Activated CD4-positive, alpha-beta T cell treated with anti-CD3 and anti-CD28 coated beads, Interleukin-2, amount 10 ng/mL, durations not matched to agents 24 days and 14 days (primary cell): ENCODE measurements at regions of chr1 and their contacts with region 1.

Region 1: DNA sequence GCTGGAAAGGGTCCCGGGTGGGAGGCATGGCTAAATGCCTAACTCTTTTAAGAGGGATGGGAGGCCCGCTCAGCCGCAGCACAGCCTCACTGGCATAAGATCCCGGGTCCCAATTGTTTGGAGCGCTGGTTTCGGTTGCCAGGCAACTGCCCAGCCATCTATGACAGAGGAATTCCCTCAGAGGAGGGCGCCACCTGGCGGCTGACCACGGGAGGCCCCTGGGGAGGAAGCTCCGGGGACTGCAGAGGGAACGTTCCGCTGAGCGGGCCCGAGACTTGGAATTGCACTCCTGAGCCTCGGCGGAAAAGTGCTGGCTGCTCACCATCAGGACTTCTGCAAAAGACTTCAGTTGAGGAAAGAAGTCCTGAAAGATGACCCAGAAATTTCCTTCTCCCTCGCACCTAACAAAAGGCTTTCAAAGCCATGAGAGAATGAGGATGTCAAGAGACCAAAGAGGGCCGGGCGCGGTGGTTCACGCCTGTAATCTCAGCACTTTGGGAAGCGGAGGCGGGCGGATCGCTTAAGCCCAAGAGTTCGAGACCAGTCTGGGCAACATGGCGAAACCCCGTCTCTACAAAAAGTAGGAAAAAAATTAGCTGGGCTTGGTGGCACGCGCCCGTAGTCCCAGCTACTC is 1.1 kb upstream of the ELAPOR1 start:
- DNase-seq: peak; percentile 97
- H3K4me3 Mint-ChIP-seq: peak overlapping the region; percentile 84
- H3K27ac Mint-ChIP-seq: peak overlapping the region; percentile 89
- H3K4me1 Mint-ChIP-seq: peaks cover 39% of the 10 kb centered on the region
- H3K27me3 Mint-ChIP-seq: peaks cover 19% of the 10 kb centered on the region

Region 2: DNA sequence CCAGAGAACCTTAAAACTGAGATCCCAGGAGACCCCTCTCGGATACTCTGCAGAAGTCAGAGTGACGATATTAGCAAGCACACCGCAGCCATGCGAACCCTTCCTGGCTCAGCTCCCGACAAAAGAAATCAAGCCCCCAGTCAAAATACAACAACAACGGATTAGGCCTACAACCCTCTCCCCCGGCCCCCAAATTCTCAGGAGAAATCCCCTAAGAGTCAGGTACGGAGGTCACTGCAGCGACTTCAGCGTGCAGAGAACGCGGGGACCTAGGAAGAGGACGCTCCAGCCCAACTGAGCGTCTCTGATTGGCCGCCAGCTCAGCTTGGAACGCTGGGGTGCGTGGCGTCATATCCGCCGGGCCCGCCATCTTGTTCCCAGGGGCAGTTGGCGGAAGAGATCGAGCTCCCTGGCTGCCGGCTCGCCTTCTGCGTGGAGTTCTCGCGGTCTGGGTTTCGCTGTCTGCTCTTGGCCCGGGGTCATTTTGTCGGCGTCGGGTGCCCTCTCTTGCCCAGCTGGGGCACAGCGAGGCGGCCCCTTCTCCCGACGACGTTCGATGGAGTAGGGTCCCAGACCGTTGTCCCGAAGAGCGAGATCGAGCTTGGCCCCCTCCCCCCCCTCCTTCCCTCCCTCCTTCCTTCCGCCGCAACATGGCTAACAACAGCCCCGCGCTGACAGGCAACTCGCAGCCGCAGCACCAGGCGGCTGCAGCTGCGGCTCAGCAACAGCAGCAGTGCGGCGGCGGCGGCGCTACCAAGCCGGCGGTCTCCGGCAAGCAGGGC is 420.6 kb before region 1 on chr1 and contains the start of gene PRPF38B:
- intact Hi-C with region 1: loop called (anchors 10 kb)
- DNase-seq: peak; percentile 98
- H3K4me3 Mint-ChIP-seq: peak within 1 kb of the TSS; percentile 99
- H3K27ac Mint-ChIP-seq: peak within 1 kb of the TSS; percentile 100
- H3K4me1 Mint-ChIP-seq: peaks cover 26% of the 10 kb centered on the region
- H3K27me3 Mint-ChIP-seq: peaks cover 14% of the 10 kb centered on the region
- total RNA-seq, gene PRPF38B: 89.2 and 90.3 TPM in 2 replicates

Region 3: GRCh38 chr1:108828022-108828961 is 284.5 kb before region 1 on chr1:
- intact Hi-C with region 1: loop called (anchors 1 kb)
- DNase-seq: peak; percentile 90
- H3K4me3 Mint-ChIP-seq: no peak overlapping the region
- H3K27ac Mint-ChIP-seq: no peak overlapping the region
- H3K4me1 Mint-ChIP-seq: peaks cover 7% of the 10 kb centered on the region
- H3K27me3 Mint-ChIP-seq: peaks cover 6% of the 10 kb centered on the region

Region 4: DNA sequence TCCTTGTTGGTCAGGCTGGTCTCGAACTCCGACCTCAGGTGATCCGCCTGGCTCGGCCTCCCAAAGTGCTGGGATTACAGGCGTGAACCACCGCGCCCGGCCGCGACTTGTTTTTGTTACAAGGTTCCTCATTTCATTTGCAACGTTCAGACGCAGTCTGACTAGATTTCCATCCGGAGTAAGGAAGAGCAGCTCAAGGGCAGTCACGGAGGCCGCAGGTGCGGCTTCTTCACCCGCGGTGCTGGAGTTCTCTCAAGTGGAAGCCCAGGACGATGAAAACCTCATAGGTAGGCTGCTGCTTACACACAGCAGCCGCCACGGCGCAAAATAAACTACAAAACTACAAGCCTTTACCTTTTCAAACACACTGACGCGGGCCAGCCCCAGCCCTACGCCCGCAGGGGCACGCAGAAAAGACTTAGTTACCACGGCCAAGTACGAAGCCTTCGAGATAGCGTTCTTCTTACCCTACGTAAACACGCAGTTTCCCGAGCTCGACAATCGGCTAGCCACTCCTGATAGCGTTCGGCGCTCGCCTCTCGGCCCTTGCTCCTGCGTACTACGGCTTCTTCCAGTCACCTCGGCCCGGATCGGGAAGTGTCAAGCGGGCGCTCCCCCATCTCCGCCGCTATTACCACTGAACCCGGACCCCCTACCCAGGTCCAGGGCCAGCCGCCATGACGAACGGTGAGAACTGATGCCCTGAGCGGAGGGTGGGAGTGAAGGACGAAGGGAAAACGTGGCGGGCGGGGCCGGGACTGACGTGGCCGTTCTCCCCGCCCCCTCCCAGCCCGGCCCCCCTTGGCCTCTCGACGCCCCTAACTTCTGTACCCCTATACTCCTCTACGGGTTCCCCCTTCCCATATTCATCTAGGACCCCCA is 22.3 kb before region 1 on chr1 and contains the start of gene TMEM167B:
- intact Hi-C with region 1: loop called (anchors 1 kb)
- DNase-seq: peak; percentile 96
- H3K4me3 Mint-ChIP-seq: peak within 1 kb of the TSS; percentile 92
- H3K27ac Mint-ChIP-seq: peak within 1 kb of the TSS; percentile 97
- H3K4me1 Mint-ChIP-seq: peaks cover 23% of the 10 kb centered on the region
- H3K27me3 Mint-ChIP-seq: no peaks in the 10 kb centered on the region
- total RNA-seq, gene TMEM167B: 26.7 and 29.2 TPM in 2 replicates

Region 5: DNA sequence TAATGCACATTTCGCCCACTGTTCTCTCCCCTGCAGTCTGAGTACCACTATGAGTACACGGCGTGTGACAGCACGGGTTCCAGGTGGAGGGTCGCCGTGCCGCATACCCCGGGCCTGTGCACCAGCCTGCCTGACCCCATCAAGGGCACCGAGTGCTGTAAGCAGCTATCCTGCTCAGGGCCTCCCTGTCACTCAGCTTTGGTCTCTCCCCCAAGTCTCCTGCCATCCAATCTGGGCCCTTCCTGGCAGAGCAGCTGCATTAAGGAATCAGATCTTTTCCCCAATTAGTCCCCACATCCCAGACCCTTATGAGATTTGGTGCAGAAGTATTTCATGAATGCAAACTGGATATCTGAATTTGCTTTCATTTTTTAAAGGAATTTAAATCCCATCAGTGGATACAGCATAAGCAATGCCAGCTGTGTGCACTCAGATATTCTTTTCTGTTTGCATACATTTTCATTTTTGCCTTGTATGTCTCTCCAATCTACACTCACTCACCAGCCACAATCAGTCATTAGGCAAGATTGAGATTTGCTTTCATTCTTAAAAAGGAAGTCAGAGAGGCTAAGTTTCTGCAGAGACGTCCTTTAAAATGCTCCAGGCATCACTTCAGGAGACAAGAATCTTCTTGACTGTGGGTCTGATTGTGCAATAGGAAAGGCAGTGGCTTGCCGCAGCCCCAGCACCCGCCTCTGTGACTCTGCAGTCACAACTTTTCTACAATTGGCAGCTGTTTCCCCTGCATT is 49.3 kb after region 1 on chr1:
- intact Hi-C with region 1: loop called (anchors 1 kb)
- DNase-seq: peak; percentile 87
- H3K4me3 Mint-ChIP-seq: peak overlapping the region; percentile 72
- H3K27ac Mint-ChIP-seq: peak overlapping the region; percentile 77
- H3K4me1 Mint-ChIP-seq: peaks cover 19% of the 10 kb centered on the region
- H3K27me3 Mint-ChIP-seq: no peaks in the 10 kb centered on the region

Region 6: DNA sequence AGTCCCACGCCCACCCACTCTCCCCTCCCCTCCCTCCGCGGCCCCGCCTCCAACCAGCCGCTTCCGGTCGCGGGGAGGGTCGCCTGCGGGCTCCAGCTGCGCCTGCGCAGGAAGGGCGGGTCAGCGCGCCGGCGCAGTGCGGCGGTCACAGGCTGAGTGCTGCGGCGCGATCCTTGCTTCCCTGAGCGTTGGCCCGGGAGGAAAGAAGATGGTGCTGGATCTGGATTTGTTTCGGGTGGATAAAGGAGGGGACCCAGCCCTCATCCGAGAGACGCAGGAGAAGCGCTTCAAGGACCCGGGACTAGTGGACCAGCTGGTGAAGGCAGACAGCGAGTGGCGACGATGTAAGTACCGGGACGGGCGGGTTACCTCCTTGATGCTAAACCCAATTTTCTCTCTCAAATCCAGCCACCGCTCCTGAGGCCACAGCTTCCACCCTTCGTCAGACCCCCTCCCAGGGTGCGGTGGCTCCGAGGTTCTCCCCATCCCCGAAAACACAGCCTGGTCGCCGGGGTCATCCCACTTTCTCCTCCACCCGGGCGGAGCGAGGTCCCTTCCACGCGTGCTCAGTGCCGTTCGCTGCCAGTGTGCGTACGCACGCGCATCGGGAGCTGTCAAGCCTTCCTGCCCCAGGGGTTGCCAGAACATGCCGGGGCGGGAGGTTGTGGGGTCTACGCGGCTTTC is 101.2 kb after region 1 on chr1 and contains the start of gene SARS1:
- intact Hi-C with region 1: loop called (anchors 5 kb)
- DNase-seq: peak; percentile 97
- H3K4me3 Mint-ChIP-seq: peak within 1 kb of the TSS; percentile 99
- H3K27ac Mint-ChIP-seq: peak within 1 kb of the TSS; percentile 96
- H3K4me1 Mint-ChIP-seq: peaks cover 25% of the 10 kb centered on the region
- H3K27me3 Mint-ChIP-seq: no peaks in the 10 kb centered on the region
- total RNA-seq, gene SARS1: 141 and 150 TPM in 2 replicates